Pancreas (tissue), 10 donors: ENCODE measurements at regions of chr6 and their contacts with region 1.

Region 1: GRCh38 chr6:80088637-80089036 is 17.8 kb upstream of the BCKDHB start:
- DNase-seq: no peak
- ATAC-seq: no peak
- H3K4me3 ChIP-seq: no peak overlapping the region
- H3K27ac ChIP-seq: no peak overlapping the region
- H3K4me1 ChIP-seq: no peaks in the 10 kb centered on the region
- H3K27me3 ChIP-seq: no peaks in the 10 kb centered on the region
- CTCF ChIP-seq: no peak

Region 2: GRCh38 chr6:79964607-79965081 is 124.0 kb before region 1 on chr6:
- intact Hi-C with region 1: loop called in 1 of 3 experiments (anchors 10 kb)
- DNase-seq: no peak
- ATAC-seq: no peak
- H3K4me3 ChIP-seq: no peak overlapping the region
- H3K27ac ChIP-seq: no peak overlapping the region
- H3K4me1 ChIP-seq: no peaks in the 10 kb centered on the region
- H3K27me3 ChIP-seq: no peaks in the 10 kb centered on the region
- CTCF ChIP-seq: no peak